GM12878 (cell line): ENCODE measurements at regions of chr15 and their contacts with region 1.

Region 1: GRCh38 chr15:64809649-64810496 is 15.6 kb downstream of the PIF1 start:
- DNase-seq: no peak
- ATAC-seq: peak; percentile 58
- H3K4me3 ChIP-seq: no peak overlapping the region
- H3K27ac ChIP-seq: no peak overlapping the region
- H3K4me1 ChIP-seq: peaks cover 17% of the 10 kb centered on the region
- H3K27me3 ChIP-seq: no peaks in the 10 kb centered on the region
- CTCF ChIP-seq: peak; percentile 92 to 95 (median 95)
- EP300 ChIP-seq: no peak
- POLR2A ChIP-seq: no peak
- RAD21 ChIP-seq: peak; percentile 92

Region 2: GRCh38 chr15:64478863-64479262 is 331.0 kb before region 1 on chr15:
- CTCF ChIA-PET with region 1: no interaction called
- POLR2A ChIA-PET with region 1: no interaction called
- RAD21 ChIA-PET with region 1: no interaction called
- SMC1A ChIA-PET with region 1: no interaction called
- in situ Hi-C with region 1: no loop called
- intact Hi-C with region 1: no loop called
- DNase-seq: no peak
- ATAC-seq: no peak
- H3K4me3 ChIP-seq: no peak overlapping the region
- H3K27ac ChIP-seq: no peak overlapping the region
- H3K4me1 ChIP-seq: no peaks in the 10 kb centered on the region; the same call in 1 of the 2 replicates
- H3K27me3 ChIP-seq: no peaks in the 10 kb centered on the region
- CTCF ChIP-seq: no peak
- EP300 ChIP-seq: no peak
- POLR2A ChIP-seq: no peak
- RAD21 ChIP-seq: no peak

Region 3: DNA sequence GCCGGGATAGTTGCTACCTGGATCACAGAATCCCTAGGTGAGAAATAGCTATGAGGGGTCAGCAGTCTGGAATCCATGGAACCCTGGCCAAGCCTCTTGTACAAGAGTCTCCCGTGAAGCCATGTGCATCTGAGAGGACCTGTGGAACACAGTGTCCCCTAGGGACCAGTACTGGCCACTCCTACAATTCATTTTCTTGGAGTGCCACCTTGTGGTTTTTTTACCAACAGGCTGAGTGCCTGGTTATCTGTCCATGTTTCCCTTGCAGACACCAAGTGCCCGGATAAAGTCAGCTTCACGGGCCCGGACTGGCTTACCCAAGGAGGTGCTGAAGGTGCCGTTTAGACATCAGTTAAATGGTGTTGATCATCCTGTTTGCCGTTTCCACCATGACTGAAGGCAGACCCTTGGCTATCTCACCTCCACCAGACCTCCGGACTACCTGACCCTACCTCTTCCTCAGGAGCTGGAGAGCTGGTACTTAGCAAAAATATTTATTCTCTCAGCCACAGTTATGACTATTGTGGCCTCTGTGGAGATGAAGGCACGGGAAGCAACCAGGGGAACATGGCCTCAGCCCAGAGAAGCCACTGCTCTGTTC is 128.3 kb before region 1 on chr15:
- CTCF ChIA-PET with region 1: interaction called, 14 read pairs
- POLR2A ChIA-PET with region 1: no interaction called
- RAD21 ChIA-PET with region 1: interaction called, 3 read pairs
- SMC1A ChIA-PET with region 1: interaction called, 6 read pairs
- in situ Hi-C with region 1: no loop called
- intact Hi-C with region 1: loop called (anchors 5 kb)
- DNase-seq: no peak
- ATAC-seq: peak; percentile 80
- H3K4me3 ChIP-seq: no peak overlapping the region
- H3K27ac ChIP-seq: no peak overlapping the region
- H3K4me1 ChIP-seq: no peaks in the 10 kb centered on the region
- H3K27me3 ChIP-seq: no peaks in the 10 kb centered on the region
- CTCF ChIP-seq: peak; percentile 47 to 82 (median 51); a peak in 4 of 6 replicates
- EP300 ChIP-seq: no peak
- POLR2A ChIP-seq: no peak
- RAD21 ChIP-seq: peak; percentile 70

Region 4: GRCh38 chr15:64749999-64750657 is 59.7 kb before region 1 on chr15:
- CTCF ChIA-PET with region 1: interaction called, 529 read pairs
- POLR2A ChIA-PET with region 1: interaction called, 11 read pairs
- RAD21 ChIA-PET with region 1: interaction called, 97 read pairs
- SMC1A ChIA-PET with region 1: interaction called, 308 read pairs
- in situ Hi-C with region 1: no loop called
- intact Hi-C with region 1: no loop called
- DNase-seq: no peak
- ATAC-seq: no peak
- H3K4me3 ChIP-seq: no peak overlapping the region
- H3K27ac ChIP-seq: no peak overlapping the region
- H3K4me1 ChIP-seq: peaks cover 17% of the 10 kb centered on the region
- H3K27me3 ChIP-seq: no peaks in the 10 kb centered on the region; a peak in 1 of 4 replicates
- CTCF ChIP-seq: no peak
- EP300 ChIP-seq: no peak
- POLR2A ChIP-seq: no peak
- RAD21 ChIP-seq: no peak

Region 5: DNA sequence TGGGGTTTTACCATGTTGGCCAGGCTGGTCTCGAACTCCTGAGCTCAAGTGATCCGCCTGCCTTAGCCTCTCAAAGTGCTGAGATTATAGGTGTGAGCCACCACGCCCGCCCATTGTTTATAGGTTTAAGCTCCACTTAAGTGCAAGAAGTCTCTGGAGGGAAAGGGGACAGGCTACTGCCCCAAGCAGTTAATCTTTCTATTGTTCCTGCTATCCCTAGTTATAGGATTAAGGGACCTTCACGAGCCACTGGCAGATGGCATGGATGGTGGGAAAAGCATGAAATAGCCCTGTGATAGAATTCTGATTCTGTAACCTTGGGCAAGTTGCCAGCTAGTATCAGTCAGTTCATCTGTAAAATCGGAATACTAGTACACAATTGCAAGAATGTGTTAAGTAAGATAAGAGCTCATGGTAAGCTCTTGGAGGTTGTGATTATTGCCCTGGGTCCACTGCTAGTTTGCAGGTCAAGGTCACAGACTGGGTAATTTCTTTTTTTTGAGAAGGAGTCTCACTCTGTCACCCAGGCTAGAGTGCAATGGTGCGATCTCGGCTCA is 29.2 kb before region 1 on chr15:
- CTCF ChIA-PET with region 1: interaction called, 55 read pairs
- POLR2A ChIA-PET with region 1: no interaction called
- RAD21 ChIA-PET with region 1: interaction called, 3 read pairs
- SMC1A ChIA-PET with region 1: interaction called, 13 read pairs
- in situ Hi-C with region 1: no loop called
- intact Hi-C with region 1: no loop called
- DNase-seq: no peak
- ATAC-seq: no peak
- H3K4me3 ChIP-seq: no peak overlapping the region
- H3K27ac ChIP-seq: no peak overlapping the region
- H3K4me1 ChIP-seq: no peaks in the 10 kb centered on the region
- H3K27me3 ChIP-seq: peaks cover 3 to 9% of the 10 kb centered on the region in 2 experiments; a peak in 3 of 4 replicates
- CTCF ChIP-seq: no peak
- EP300 ChIP-seq: no peak
- POLR2A ChIP-seq: no peak
- RAD21 ChIP-seq: no peak

Region 6: DNA sequence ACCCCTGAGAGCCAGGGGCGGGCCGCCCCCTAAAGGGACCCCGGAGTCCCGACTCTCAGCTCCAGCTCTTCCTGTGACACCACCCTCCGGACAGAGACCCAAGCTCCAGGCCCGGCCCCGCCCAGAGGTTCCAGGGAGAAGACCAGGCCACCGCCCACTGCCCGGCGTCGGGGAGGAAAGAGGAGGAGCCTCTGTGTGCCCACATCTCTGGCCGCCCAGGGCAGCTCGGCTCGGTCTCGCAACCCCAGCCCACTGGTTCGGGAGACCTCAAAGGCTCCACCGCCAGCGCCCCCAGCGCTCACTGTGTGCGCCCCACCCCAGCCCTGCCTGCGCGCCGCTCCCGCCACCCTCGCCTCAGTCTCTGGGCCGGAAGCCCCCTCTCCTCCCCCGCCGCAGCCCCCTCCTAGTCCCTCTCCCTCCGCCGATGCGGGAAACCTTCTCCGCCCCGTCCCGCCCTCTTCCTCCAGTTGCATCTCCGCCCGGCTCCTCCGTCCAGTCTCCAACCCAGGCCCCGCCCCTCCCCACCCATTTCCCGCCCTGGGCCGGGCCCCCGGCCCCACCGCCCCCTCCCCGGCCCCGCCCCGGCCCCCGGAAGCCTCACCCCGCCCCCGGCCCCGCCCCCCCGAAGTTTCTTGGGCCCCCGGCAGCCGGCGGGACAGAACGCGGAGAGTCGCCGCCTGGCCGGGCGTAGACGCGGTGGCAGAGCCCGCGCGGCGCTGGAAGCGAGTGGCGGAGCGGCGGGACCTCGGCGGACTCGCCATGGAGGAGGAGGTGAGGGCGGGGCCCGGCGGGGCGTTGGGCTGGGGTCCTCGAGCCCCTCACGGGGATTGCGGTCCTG is 31.6 kb after region 1 on chr15 and contains the start of gene PLEKHO2:
- CTCF ChIA-PET with region 1: interaction called, 115 read pairs
- POLR2A ChIA-PET with region 1: interaction called, 20 read pairs
- RAD21 ChIA-PET with region 1: interaction called, 26 read pairs
- SMC1A ChIA-PET with region 1: interaction called, 28 read pairs
- in situ Hi-C with region 1: no loop called
- intact Hi-C with region 1: no loop called
- DNase-seq: peak; percentile 53
- ATAC-seq: peak; percentile 75
- H3K4me3 ChIP-seq: peak within 1 kb of the TSS; percentile 99
- H3K27ac ChIP-seq: peak within 1 kb of the TSS; percentile 67
- H3K4me1 ChIP-seq: peaks cover 12% of the 10 kb centered on the region
- H3K27me3 ChIP-seq: no peaks in the 10 kb centered on the region
- CTCF ChIP-seq: peak; percentile 6 to 41 (median 11); a peak in 2 of 6 replicates
- EP300 ChIP-seq: no peak
- POLR2A ChIP-seq: peak; percentile 96
- RAD21 ChIP-seq: no peak
- polyA plus RNA-seq, gene PLEKHO2: 1.4 to 3.1 TPM

Region 7: GRCh38 chr15:65008983-65009382 is 199.1 kb after region 1 on chr15:
- CTCF ChIA-PET with region 1: interaction called, 16 read pairs
- POLR2A ChIA-PET with region 1: no interaction called
- RAD21 ChIA-PET with region 1: interaction called, 4 read pairs
- SMC1A ChIA-PET with region 1: interaction called, 3 read pairs
- in situ Hi-C with region 1: no loop called
- intact Hi-C with region 1: no loop called
- DNase-seq: no peak
- ATAC-seq: peak; percentile 56; the same call in 2 of the 3 replicates
- H3K4me3 ChIP-seq: no peak overlapping the region
- H3K27ac ChIP-seq: no peak overlapping the region
- H3K4me1 ChIP-seq: no peaks in the 10 kb centered on the region
- H3K27me3 ChIP-seq: no peaks in the 10 kb centered on the region
- CTCF ChIP-seq: peak in 2 of 3 experiments; percentile 23 to 46; a peak in 3 of 6 replicates
- EP300 ChIP-seq: no peak
- POLR2A ChIP-seq: no peak
- RAD21 ChIP-seq: peak; percentile 50

Region 8: GRCh38 chr15:65060641-65061397 is 250.9 kb after region 1 on chr15:
- CTCF ChIA-PET with region 1: no interaction called
- POLR2A ChIA-PET with region 1: no interaction called
- RAD21 ChIA-PET with region 1: no interaction called
- SMC1A ChIA-PET with region 1: no interaction called
- in situ Hi-C with region 1: no loop called
- intact Hi-C with region 1: no loop called
- DNase-seq: no peak
- ATAC-seq: no peak
- H3K4me3 ChIP-seq: no peak overlapping the region
- H3K27ac ChIP-seq: no peak overlapping the region
- H3K4me1 ChIP-seq: no peaks in the 10 kb centered on the region
- H3K27me3 ChIP-seq: no peaks in the 10 kb centered on the region; a peak in 2 of 4 replicates
- CTCF ChIP-seq: no peak
- EP300 ChIP-seq: no peak
- POLR2A ChIP-seq: no peak
- RAD21 ChIP-seq: no peak